CD4-positive, alpha-beta T cell (primary cell): ENCODE measurements at regions of chr5 and their contacts with region 1.

Region 1: GRCh38 chr5:172932313-172933017 is 26.8 kb upstream of the RPL26L1 start:
- DNase-seq: peak; percentile 61 to 87 (median 70)
- ATAC-seq: peak; percentile 99
- H3K4me3 ChIP-seq: no peak overlapping the region
- H3K4me3 Mint-ChIP-seq: no peak overlapping the region
- H3K27ac ChIP-seq: no peak overlapping the region
- H3K27ac Mint-ChIP-seq: peak overlapping the region; percentile 23
- H3K4me1 ChIP-seq: peaks cover 6% of the 10 kb centered on the region
- H3K4me1 Mint-ChIP-seq: peaks cover 7% of the 10 kb centered on the region
- H3K27me3 ChIP-seq: no peaks in the 10 kb centered on the region
- H3K27me3 Mint-ChIP-seq: no peaks in the 10 kb centered on the region
- CTCF ChIP-seq: peak; percentile 87

Region 2: GRCh38 chr5:172479044-172479783 is 453.3 kb before region 1 on chr5:
- CTCF ChIA-PET with region 1: no interaction called
- POLR2A ChIA-PET with region 1: no interaction called
- intact Hi-C with region 1: loop called in 1 of 2 experiments (anchors 5 kb)
- DNase-seq: peak; percentile 12 to 81 (median 45)
- ATAC-seq: peak; percentile 79
- H3K4me3 ChIP-seq: no peak overlapping the region
- H3K4me3 Mint-ChIP-seq: no peak overlapping the region
- H3K27ac ChIP-seq: no peak overlapping the region
- H3K27ac Mint-ChIP-seq: no peak overlapping the region
- H3K4me1 ChIP-seq: no peaks in the 10 kb centered on the region
- H3K4me1 Mint-ChIP-seq: no peaks in the 10 kb centered on the region
- H3K27me3 ChIP-seq: no peaks in the 10 kb centered on the region
- H3K27me3 Mint-ChIP-seq: peaks cover 6% of the 10 kb centered on the region
- CTCF ChIP-seq: peak; percentile 55

Region 3: GRCh38 chr5:172777881-172778814 is 154.3 kb before region 1 on chr5:
- CTCF ChIA-PET with region 1: interaction called, 3 read pairs
- POLR2A ChIA-PET with region 1: interaction called, 27 read pairs
- intact Hi-C with region 1: loop called in 1 of 2 experiments (anchors 5 kb)
- DNase-seq: peak in 3 of 14 experiments; percentile 22 to 64 (median 54)
- ATAC-seq: peak; percentile 56
- H3K4me3 ChIP-seq: peak overlapping the region; percentile 27
- H3K4me3 Mint-ChIP-seq: peak overlapping the region; percentile 68
- H3K27ac ChIP-seq: peak overlapping the region; percentile 68 to 93
- H3K27ac Mint-ChIP-seq: peak overlapping the region; percentile 95
- H3K4me1 ChIP-seq: peaks cover 43% of the 10 kb centered on the region
- H3K4me1 Mint-ChIP-seq: peaks cover 45% of the 10 kb centered on the region
- H3K27me3 ChIP-seq: no peaks in the 10 kb centered on the region
- H3K27me3 Mint-ChIP-seq: no peaks in the 10 kb centered on the region
- CTCF ChIP-seq: no peak

Region 4: DNA sequence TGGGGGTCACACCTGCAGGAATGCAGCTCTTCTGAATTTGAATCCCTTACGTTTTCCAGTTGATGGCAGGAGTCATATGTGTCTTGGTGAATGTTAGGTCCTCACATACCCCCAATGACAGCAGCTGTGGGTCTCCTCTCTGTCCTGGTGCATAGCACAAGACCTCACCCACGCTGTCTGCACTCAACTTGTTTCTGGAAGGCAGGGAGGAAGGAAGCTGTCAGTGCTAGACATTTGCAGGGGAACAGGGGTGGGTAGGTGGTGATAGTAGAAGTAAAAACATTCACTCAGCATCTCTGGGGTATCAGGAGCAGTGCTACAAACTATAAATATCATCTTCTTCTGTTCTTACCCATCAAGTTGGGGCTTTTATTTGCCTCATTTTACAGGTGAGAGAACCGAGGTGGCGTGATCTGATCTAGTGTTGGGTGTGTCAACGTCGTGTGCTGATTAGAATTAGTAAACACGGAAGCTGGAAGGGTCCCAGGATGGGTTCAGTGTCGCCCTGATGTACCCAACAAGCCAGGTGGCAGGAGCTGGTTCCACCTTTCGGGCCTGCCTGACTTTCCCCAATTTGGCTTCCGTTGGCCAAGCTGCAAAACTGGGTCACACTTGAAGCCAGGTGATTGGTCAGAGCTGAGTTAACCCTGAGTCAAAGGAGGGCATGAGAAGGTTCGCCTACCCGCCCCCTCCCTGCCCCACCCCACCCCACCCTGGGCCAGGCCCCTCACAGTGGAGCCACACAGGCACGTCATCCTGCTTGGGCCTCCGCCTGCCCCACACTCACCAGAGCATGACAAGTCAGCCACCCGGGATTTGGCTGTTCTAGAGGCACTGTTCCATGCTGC is 82.6 kb before region 1 on chr5:
- CTCF ChIA-PET with region 1: no interaction called
- POLR2A ChIA-PET with region 1: no interaction called
- intact Hi-C with region 1: loop called in 1 of 2 experiments (anchors 5 kb)
- DNase-seq: no peak
- ATAC-seq: no peak
- H3K4me3 ChIP-seq: no peak overlapping the region
- H3K4me3 Mint-ChIP-seq: no peak overlapping the region
- H3K27ac ChIP-seq: no peak overlapping the region
- H3K27ac Mint-ChIP-seq: peak overlapping the region; percentile 72
- H3K4me1 ChIP-seq: peaks cover 30% of the 10 kb centered on the region
- H3K4me1 Mint-ChIP-seq: peaks cover 51% of the 10 kb centered on the region
- H3K27me3 ChIP-seq: no peaks in the 10 kb centered on the region
- H3K27me3 Mint-ChIP-seq: no peaks in the 10 kb centered on the region
- CTCF ChIP-seq: no peak

Region 5: DNA sequence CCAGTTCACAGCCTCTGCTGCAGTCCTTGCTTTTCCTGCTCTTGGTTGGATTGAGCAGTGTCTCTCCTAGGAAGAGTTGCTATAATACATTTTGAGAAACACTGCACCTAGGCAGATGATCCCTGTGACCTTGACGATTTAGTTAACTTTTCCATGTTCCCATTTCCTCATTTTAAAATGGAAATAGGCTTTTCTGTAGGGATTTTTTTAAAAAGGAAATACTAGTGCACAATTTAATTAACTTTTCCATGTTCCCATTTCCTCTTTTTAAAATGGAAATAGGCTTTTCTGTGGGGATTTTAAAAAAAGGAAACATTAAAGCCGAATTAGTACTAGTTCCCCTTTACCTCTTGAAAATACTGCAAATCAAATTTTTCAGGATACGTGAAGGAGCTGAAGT is 55.8 kb after region 1 on chr5:
- CTCF ChIA-PET with region 1: no interaction called
- POLR2A ChIA-PET with region 1: no interaction called
- intact Hi-C with region 1: no loop called
- DNase-seq: no peak
- ATAC-seq: no peak
- H3K4me3 ChIP-seq: no peak overlapping the region
- H3K4me3 Mint-ChIP-seq: no peak overlapping the region
- H3K27ac ChIP-seq: no peak overlapping the region
- H3K27ac Mint-ChIP-seq: no peak overlapping the region
- H3K4me1 ChIP-seq: peaks cover 35% of the 10 kb centered on the region
- H3K4me1 Mint-ChIP-seq: peaks cover 67% of the 10 kb centered on the region
- H3K27me3 ChIP-seq: no peaks in the 10 kb centered on the region
- H3K27me3 Mint-ChIP-seq: no peaks in the 10 kb centered on the region
- CTCF ChIP-seq: no peak